ENCODE measurements at regions of chr7 and their contacts with region 1.

Region 1: DNA sequence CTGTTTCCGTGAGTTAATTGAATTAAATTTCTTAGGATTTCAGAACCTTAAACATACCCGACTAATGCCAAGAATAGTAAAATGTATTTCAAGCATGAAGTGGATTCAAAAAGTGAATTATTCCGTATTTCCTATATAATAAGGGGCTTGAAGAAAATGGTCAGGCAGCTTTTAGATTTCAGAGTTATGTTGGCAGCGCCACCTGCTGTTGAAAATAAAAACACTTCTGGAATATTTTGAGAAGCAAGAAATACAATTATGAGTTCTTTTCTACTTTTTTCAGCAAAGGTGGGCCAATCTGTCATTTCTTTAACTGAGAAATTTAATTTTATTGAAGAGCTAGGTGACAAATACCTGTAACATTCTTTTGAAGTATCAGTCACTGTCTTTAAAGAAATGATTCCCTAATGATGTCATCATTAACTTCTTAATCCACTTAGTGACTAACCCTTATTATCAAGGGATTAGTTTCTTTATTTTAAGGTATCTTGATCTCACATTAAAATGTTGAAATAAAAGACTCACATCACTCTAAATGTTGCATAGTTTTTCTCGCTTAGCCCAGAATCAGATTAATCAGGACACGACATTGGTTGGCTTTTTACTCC is 36.6 kb upstream of the AGR3 start:
- DNase-seq: peak; percentile 38
- H3K4me3 ChIP-seq: no peak overlapping the region; a peak in 1 of 4 replicates
- H3K27ac ChIP-seq: no peak overlapping the region
- H3K4me1 ChIP-seq: peaks cover 0 to 18% of the 10 kb centered on the region in 2 experiments; a peak in 1 of 4 replicates
- H3K27me3 ChIP-seq: no peaks in the 10 kb centered on the region
- CTCF ChIP-seq: peak; percentile 97
- EP300 ChIP-seq: no peak
- RAD21 ChIP-seq: peak; percentile 80

Region 2: GRCh38 chr7:16603633-16604032 is 314.8 kb before region 1 on chr7:
- CTCF ChIA-PET with region 1: interaction called, 10 read pairs
- POLR2A ChIA-PET with region 1: no interaction called
- DNase-seq: no peak
- H3K4me3 ChIP-seq: no peak overlapping the region
- H3K27ac ChIP-seq: no peak overlapping the region
- H3K4me1 ChIP-seq: no peaks in the 10 kb centered on the region; a peak in 1 of 4 replicates
- H3K27me3 ChIP-seq: no peaks in the 10 kb centered on the region
- CTCF ChIP-seq: no peak
- EP300 ChIP-seq: no peak
- RAD21 ChIP-seq: no peak

Region 3: DNA sequence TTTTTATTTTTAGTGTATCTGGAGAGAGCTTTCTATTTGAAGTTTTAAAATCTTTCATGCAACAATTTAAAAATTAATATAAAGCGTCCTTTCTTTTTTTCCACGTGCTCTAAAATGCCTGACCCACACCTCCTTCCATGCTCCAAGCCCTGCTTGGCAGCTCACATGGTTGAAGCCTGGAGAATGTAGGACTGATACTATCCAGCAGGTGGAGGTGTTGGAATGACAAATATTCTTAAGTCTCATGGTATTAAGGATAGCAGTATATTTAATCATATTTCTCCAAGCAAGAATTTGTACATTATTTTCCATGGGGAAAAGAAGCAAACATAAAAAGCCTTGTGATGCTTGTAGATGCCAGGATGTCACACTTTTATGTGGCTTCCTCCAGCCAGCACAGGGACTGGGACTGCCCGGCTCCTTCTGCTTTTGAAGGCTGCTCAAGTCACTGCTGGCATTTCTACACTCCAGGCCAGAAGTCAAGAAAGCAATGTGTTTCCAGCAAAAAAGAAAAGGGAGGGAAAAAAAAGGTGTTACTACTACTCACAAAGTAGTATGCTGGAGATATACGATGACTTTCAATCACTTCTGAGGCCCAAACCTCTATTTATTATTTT is 222.7 kb before region 1 on chr7:
- CTCF ChIA-PET with region 1: interaction called, 34 read pairs
- POLR2A ChIA-PET with region 1: no interaction called
- DNase-seq: peak; percentile 39
- H3K4me3 ChIP-seq: no peak overlapping the region
- H3K27ac ChIP-seq: no peak overlapping the region
- H3K4me1 ChIP-seq: peaks cover 0 to 20% of the 10 kb centered on the region in 2 experiments; a peak in 1 of 4 replicates
- H3K27me3 ChIP-seq: no peaks in the 10 kb centered on the region
- CTCF ChIP-seq: peak; percentile 77
- EP300 ChIP-seq: no peak
- RAD21 ChIP-seq: peak; percentile 76

Region 4: DNA sequence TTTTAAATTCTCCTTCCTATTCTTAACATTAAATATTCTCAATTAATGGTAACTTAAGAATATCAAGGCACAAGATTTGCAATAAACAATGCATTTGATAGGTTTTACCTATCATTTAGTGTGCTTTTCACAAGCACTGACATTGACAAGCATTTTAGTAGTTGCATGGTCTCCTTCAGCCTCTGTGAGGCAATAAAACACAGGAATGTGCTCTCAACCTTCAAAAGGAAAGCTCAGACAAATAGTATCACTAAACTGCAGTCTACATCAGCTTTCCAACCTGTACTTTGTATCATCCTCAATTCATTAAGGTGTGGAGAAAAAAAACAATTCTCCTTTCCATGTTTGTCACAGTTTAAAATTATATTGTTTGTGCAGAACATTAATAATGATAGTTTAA is 216.0 kb before region 1 on chr7:
- CTCF ChIA-PET with region 1: interaction called, 32 read pairs
- POLR2A ChIA-PET with region 1: no interaction called
- DNase-seq: no peak
- H3K4me3 ChIP-seq: no peak overlapping the region
- H3K27ac ChIP-seq: no peak overlapping the region
- H3K4me1 ChIP-seq: peaks cover 0 to 17% of the 10 kb centered on the region in 2 experiments; a peak in 1 of 4 replicates
- H3K27me3 ChIP-seq: no peaks in the 10 kb centered on the region
- CTCF ChIP-seq: 0 out of 2 replicates have a peak, but pooled peaks have one; percentile 11
- EP300 ChIP-seq: no peak
- RAD21 ChIP-seq: peak; percentile 49; the same call in 1 of the 2 replicates

Region 5: DNA sequence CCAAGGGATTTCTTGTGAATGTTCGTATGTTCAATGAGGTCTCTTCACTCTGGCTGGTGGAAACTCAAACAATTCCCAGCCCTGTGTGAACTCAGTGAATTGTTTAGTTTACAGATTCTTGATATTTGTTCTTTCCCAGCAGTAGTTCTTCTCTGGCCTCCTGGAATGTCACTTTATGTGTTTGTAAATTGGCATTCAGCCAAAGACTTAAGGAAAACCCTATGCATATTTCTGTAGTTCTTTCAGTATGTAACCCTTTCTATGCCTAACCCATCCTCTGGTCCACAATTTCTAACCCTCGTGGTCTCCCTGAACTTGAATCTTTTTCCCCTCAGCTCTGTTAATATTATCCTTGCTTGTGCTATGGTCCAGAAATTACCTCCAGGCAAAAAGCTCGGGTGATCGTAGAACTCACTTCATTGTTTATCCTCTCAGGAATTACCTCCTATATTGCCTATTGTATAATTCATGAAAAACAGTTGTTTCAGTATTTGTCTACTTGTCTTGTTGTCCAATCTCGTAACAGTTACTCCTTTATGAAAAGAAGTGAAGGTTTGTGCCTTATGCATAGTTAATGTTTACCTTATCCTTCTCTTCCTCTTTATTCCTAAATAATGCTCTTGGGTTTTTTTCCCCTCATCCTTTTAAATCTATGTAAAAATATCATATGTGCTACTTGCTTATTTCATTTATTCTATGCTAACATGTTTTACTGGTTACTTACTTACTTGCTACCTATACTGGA is 12.9 kb before region 1 on chr7:
- CTCF ChIA-PET with region 1: interaction called, 13 read pairs
- POLR2A ChIA-PET with region 1: no interaction called
- DNase-seq: no peak
- H3K4me3 ChIP-seq: no peak overlapping the region
- H3K27ac ChIP-seq: no peak overlapping the region
- H3K4me1 ChIP-seq: no peaks in the 10 kb centered on the region
- H3K27me3 ChIP-seq: no peaks in the 10 kb centered on the region
- CTCF ChIP-seq: no peak
- EP300 ChIP-seq: no peak
- RAD21 ChIP-seq: no peak

Region 6: DNA sequence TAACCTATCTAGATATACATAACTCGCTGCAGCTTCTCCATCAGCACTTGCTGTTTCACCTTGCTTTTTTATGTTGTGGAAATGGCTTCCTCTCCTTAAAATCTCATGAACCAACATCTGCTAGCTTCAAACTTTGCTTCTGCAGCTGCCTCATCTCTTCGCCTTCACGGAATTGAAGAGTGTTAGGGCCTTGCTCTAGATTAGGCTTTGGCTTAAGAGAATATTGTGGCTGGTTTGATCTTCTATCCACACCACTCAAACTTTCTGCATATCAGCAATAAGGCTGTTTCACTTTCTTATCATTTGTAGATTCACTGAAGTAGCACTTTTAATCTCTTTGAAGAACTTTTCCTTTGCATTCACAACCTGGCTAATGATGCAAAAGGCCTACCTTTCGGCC is 12.6 kb after region 1 on chr7:
- CTCF ChIA-PET with region 1: interaction called, 12 read pairs
- POLR2A ChIA-PET with region 1: no interaction called
- DNase-seq: no peak
- H3K4me3 ChIP-seq: no peak overlapping the region
- H3K27ac ChIP-seq: no peak overlapping the region
- H3K4me1 ChIP-seq: no peaks in the 10 kb centered on the region
- H3K27me3 ChIP-seq: peaks cover under 1% of the 10 kb centered on the region; the same call in 1 of the 2 replicates
- CTCF ChIP-seq: no peak
- EP300 ChIP-seq: no peak
- RAD21 ChIP-seq: no peak

Region 7: DNA sequence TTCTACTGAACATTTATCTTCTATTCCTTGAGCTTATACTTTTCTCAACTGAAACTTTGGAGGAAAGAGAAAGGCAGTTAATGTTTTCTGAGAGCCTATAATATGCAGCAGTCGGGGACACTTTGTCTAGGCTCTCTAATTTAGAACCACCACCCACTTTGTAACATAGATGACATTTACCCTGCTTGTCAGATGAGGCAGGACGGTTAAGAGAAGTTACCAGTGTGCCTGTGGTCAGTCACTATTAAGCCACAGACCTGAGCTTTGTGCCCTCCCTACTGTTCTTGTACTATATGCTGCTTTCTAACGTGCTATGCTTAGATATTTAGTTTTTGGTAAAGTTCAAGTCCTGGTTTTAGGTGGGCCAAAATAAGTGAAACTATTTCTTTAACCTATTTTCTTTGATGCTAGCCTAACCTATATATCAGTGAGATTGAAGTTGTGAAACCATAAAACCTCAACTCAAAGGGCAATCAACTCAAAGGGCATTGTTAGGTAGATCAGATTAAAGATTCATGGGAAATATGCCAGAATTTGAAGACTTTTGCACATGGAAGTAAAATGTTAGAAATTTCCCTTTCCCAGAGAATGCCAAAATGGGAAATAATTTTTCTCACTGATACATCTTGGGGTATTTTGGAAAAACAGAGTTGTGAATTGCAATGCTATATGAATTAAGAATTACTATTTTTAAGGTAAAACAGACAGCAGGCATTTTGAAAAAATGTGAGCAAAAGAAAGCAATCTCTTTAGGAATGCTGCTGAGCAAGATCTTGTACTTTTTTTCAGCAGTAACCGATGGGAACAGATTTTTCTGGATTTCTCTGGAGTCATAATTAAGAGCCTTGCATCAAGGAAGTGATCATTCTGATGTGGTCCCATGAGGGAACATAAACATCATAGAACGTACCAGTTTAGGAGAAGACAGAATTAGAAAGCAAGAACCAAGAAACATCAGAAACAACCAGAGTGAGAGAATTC is 120.1 kb after region 1 on chr7:
- CTCF ChIA-PET with region 1: no interaction called
- POLR2A ChIA-PET with region 1: no interaction called
- DNase-seq: no peak
- H3K4me3 ChIP-seq: no peak overlapping the region
- H3K27ac ChIP-seq: no peak overlapping the region
- H3K4me1 ChIP-seq: peaks cover 0 to 5% of the 10 kb centered on the region in 2 experiments; a peak in 1 of 4 replicates
- H3K27me3 ChIP-seq: peaks cover 10% of the 10 kb centered on the region; the same call in 1 of the 2 replicates
- CTCF ChIP-seq: no peak
- EP300 ChIP-seq: no peak
- RAD21 ChIP-seq: no peak

Region 8: GRCh38 chr7:17144322-17144721 is 225.9 kb after region 1 on chr7:
- CTCF ChIA-PET with region 1: no interaction called
- POLR2A ChIA-PET with region 1: no interaction called
- DNase-seq: no peak
- H3K4me3 ChIP-seq: peak overlapping the region; percentile 7 to 25; a peak in 2 of 4 replicates
- H3K27ac ChIP-seq: peak overlapping the region in 1 of 2 experiments; percentile 31; a peak in 2 of 4 replicates
- H3K4me1 ChIP-seq: peaks cover 0 to 16% of the 10 kb centered on the region in 2 experiments; a peak in 2 of 4 replicates
- H3K27me3 ChIP-seq: no peaks in the 10 kb centered on the region
- CTCF ChIP-seq: no peak
- EP300 ChIP-seq: peak in 1 of 2 experiments; percentile 28; a peak in 1 of 4 replicates
- RAD21 ChIP-seq: no peak

Region 9: GRCh38 chr7:17195576-17195975 is 277.2 kb after region 1 on chr7:
- CTCF ChIA-PET with region 1: no interaction called
- POLR2A ChIA-PET with region 1: no interaction called
- DNase-seq: no peak
- H3K4me3 ChIP-seq: no peak overlapping the region
- H3K27ac ChIP-seq: no peak overlapping the region
- H3K4me1 ChIP-seq: no peaks in the 10 kb centered on the region
- H3K27me3 ChIP-seq: peaks cover 30% of the 10 kb centered on the region
- CTCF ChIP-seq: no peak
- EP300 ChIP-seq: no peak
- RAD21 ChIP-seq: no peak